ENCODE measurements at regions of chr10 and their contacts with region 1.

Region 1: GRCh38 chr10:92901819-92902251 is 53.5 kb downstream of the EXOC6 start:
- DNase-seq: no peak
- H3K4me3 ChIP-seq: no peak overlapping the region
- CTCF ChIP-seq: no peak

Region 2: GRCh38 chr10:92914478-92915325 is 12.9 kb after region 1 on chr10:
- CTCF ChIA-PET with region 1: interaction called, 10 read pairs
- POLR2A ChIA-PET with region 1: no interaction called
- DNase-seq: peak; percentile 7
- H3K4me3 ChIP-seq: no peak overlapping the region
- CTCF ChIP-seq: peak; percentile 74

Region 3: GRCh38 chr10:92931597-92931996 is 29.8 kb after region 1 on chr10:
- CTCF ChIA-PET with region 1: no interaction called
- POLR2A ChIA-PET with region 1: no interaction called
- DNase-seq: no peak
- H3K4me3 ChIP-seq: no peak overlapping the region
- CTCF ChIP-seq: no peak

Measured in AG04449 (cell line).